ENCODE measurements at regions of chr1 and their contacts with region 1.

Region 1: DNA sequence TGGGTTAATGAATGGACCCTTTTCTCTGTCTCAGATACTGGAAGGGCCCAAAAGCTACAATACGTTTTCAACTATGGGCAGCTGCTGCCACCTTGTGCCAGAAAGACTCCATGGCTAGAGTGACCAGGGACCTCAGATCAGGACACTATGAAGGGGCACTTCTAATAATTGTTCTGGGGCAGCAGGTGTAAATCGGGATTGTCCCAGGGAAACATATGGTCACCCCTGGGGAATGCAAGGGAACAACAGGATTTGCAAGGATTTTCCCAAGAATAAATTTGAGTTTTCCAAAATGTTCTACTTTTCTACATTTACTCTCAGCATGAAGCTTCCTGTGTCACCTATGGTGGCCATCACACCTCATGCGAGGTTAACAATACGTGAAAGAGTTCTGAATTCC is 12.0 kb upstream of the FCAMR start:
- DNase-seq: no peak
- H3K4me3 ChIP-seq: no peak overlapping the region
- H3K27ac ChIP-seq: no peak overlapping the region
- H3K4me1 ChIP-seq: no peaks in the 10 kb centered on the region
- H3K27me3 ChIP-seq: peaks cover 0 to 7% (median 0%) of the 10 kb centered on the region in 4 donors
- CTCF ChIP-seq: peak; percentile 30 to 50 (median 41)
- EP300 ChIP-seq: no peak
- POLR2A ChIP-seq: no peak

Region 2: DNA sequence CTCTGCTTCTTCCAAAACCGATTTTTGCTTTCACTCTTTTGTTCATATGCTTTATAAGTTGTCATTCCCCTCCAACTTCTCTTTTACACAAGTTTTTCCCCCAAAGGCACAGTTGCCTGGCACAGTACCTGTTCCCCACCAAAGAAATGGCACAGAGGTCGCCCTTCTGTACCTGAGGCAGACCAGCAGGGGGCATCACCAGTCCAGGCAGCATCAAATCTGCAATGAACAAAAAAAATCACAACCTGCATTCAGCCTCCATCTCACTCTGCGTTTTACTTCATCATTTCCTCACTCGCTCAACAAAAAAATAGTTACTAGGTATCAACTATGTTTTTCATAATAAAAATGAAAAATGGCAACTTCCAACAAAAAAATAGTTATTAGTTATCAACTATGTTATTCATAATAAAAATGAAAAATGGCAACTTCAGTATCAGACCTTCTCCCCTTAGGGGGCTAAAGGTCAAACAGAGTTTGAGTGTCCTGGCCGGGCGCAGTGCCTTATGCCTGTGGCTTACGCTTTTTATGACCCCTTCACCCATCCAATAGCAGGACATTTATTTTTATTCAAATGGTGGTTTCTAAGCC is 374.0 kb before region 1 on chr1:
- intact Hi-C with region 1: loop called (anchors 10 kb)
- DNase-seq: no peak
- H3K4me3 ChIP-seq: no peak overlapping the region
- H3K27ac ChIP-seq: no peak overlapping the region
- H3K4me1 ChIP-seq: peaks cover 8 to 18% (median 10%) of the 10 kb centered on the region in 4 donors
- H3K27me3 ChIP-seq: no peaks in the 10 kb centered on the region
- CTCF ChIP-seq: peak; percentile 51 to 66 (median 55)
- EP300 ChIP-seq: no peak
- POLR2A ChIP-seq: no peak

Region 3: GRCh38 chr1:206658264-206658980 is 323.8 kb before region 1 on chr1:
- intact Hi-C with region 1: no loop called
- DNase-seq: no peak
- H3K4me3 ChIP-seq: no peak overlapping the region
- H3K27ac ChIP-seq: no peak overlapping the region
- H3K4me1 ChIP-seq: peaks cover 22 to 46% (median 28%) of the 10 kb centered on the region in 4 donors
- H3K27me3 ChIP-seq: peaks cover 0 to 6% (median 0%) of the 10 kb centered on the region in 4 donors
- CTCF ChIP-seq: peak; percentile 44 to 63 (median 49)
- EP300 ChIP-seq: no peak
- POLR2A ChIP-seq: no peak